H1 (cell line): ENCODE measurements at regions of chr2 and their contacts with region 1.

Region 1: DNA sequence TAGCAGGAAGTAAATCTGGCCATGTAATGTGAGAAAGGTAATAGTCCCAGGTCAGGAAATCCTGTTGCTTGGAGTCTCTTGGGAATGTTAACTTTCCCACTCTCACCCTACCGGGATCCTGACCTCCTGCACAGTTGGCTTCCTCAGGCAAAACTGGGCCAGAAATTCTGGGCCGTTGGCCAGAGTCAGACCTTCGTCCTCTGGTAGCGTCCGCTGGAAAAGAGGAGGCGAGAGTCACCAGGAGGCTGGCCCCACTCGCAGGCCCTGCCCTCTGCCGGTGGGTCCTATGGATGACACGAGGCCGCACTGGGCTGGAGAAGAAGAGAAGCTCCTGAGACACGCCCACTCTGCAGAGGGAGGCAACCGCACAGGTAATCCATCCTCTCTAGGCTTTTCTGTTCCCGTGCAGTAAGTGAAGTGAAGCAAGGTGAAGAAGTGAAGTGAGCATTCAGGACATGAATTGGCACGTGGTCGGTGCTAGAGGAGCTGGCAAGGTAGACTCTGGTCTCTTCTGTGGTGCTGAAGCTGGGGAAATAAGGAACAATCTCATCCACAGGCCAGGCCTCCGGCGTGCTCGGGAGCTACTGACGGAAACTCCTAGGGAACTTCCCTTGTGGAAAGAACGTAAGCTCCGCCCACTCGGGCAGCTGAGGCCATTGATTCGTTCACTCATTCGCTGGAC is 182.7 kb upstream of the GLI2 start:
- DNase-seq: peak; percentile 41 to 91
- H3K4me3 ChIP-seq: peak overlapping the region; percentile 31 to 51 (median 37); a peak in 5 of 8 replicates
- H3K27ac ChIP-seq: no peak overlapping the region
- H3K4me1 ChIP-seq: no peaks in the 10 kb centered on the region; a peak in 1 of 7 replicates
- H3K27me3 ChIP-seq: peaks cover 4 to 25% (median 19%) of the 10 kb centered on the region in 4 experiments
- CTCF ChIP-seq: peak; percentile 88 to 94 (median 88)
- EP300 ChIP-seq: no peak
- POLR2A ChIP-seq: no peak
- RAD21 ChIP-seq: peak; percentile 68 to 79

Region 2: DNA sequence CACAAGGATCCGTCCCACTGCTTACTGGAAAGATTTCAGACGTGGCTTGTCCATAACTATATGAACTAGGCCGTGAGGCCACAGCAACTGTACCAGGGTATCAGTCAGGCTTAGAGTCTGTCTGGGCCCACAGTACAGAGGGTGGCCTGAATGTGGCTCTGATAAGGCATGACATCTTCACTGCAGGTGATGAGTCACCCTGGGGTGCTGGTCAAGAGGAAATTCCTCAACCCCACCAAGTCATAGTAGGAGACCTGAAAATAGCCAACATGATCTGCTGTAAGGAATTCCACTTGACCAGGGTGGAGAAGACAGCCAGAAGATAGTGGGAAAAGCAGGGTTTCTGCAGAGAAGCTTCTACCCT is 99.3 kb before region 1 on chr2:
- CTCF ChIA-PET with region 1: interaction called, 10 read pairs
- POLR2A ChIA-PET with region 1: no interaction called
- DNase-seq: no peak
- H3K4me3 ChIP-seq: no peak overlapping the region
- H3K27ac ChIP-seq: no peak overlapping the region
- H3K4me1 ChIP-seq: peaks cover 0 to 2% (median 0%) of the 10 kb centered on the region in 4 experiments; a peak in 2 of 7 replicates
- H3K27me3 ChIP-seq: peaks cover 0 to 19% (median 9%) of the 10 kb centered on the region in 4 experiments; a peak in 3 of 7 replicates
- CTCF ChIP-seq: no peak
- EP300 ChIP-seq: no peak
- POLR2A ChIP-seq: no peak
- RAD21 ChIP-seq: no peak

Region 3: DNA sequence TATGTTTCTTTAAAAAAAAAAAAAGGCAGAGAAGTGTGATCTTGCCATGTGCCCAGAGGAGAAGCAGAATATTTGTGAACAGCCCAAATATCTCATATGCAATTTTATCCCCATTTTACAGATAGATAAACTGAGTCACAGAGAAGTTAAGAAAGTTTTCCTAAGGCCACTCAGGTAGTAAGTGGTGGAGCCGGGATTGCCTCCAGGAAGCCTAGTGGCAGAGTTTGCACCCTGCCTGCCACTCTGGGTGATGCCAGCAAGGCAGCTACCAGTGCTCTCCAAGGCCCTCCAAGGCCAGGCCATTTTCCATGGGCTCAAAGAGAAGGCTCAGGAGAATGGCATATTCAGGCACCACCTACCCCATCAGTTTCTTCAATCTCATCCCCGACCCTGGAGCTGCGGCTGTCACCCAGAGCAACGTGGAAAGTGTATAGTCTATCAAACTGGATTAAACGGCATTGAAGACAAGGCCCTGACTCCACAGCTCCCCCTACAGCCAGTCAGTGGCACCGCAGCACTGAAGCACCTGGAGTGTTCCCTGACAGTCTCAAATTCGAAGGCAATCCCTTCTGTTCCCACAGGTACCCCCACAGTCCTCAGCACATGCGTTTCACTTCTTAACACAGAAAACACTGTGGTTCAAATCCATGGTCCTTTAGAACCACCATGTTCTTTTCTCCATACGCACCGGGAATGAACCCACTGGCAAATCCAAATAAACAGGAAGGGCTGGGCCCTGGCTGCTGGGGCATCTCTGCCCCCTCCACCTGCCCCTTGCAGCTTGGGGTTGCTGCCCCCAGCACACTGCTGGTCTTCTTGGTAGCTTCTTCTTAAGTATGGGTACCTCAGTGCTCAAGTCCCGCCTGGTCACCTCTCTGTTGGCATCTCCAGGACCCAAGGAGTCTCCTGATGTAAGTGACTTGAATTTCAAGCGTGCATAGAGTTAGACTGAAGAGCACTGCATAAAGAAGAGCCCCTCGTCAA is 31.7 kb before region 1 on chr2:
- CTCF ChIA-PET with region 1: interaction called, 17 read pairs
- POLR2A ChIA-PET with region 1: no interaction called
- DNase-seq: peak in 1 of 2 experiments; percentile 89
- H3K4me3 ChIP-seq: no peak overlapping the region
- H3K27ac ChIP-seq: no peak overlapping the region
- H3K4me1 ChIP-seq: peaks cover 0 to 7% (median 4%) of the 10 kb centered on the region in 4 experiments; a peak in 5 of 7 replicates
- H3K27me3 ChIP-seq: peaks cover 0 to 6% (median 4%) of the 10 kb centered on the region in 4 experiments; a peak in 4 of 7 replicates
- CTCF ChIP-seq: peak; percentile 85 to 98 (median 96)
- EP300 ChIP-seq: no peak
- POLR2A ChIP-seq: no peak
- RAD21 ChIP-seq: peak; percentile 67 to 69

Region 4: DNA sequence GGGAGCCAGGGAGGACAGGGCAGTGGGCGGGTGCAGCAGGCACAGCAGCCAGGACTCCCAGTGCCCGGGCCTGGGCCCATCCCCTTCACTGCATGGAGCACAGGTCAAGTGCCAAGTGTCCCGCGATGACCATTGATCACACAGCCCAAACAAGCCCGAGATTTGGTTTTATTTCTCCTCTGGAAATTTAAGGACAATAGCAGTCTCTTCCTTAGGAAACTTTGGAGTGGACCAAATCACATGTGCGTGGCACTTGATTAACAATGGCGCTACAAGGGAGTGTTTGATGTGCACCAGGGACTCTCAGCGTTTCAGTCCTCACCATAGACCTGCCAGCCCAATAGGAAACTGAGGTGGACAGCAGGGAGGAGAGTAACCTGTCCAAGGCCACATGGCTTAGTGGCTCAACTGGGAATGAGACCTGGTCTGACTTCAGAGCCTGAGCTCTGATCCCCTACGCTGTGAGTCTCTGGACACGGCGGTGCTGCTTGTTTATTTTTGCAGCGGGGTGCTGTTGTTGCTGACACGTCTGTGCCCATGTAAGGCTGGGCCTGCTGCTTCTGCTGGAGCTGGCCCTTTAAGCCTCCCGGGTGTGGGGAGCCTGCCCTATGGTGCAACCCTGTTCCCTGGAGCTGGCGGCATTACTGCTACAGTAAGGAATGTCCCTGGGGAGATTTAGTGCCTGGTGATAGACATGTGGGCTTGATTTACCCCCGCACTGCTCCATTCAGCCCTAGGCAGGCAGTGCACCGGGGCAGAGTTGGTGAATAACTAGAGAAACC is 12.8 kb before region 1 on chr2:
- CTCF ChIA-PET with region 1: interaction called, 24 read pairs
- POLR2A ChIA-PET with region 1: interaction called, 3 read pairs
- DNase-seq: no peak
- H3K4me3 ChIP-seq: no peak overlapping the region
- H3K27ac ChIP-seq: no peak overlapping the region
- H3K4me1 ChIP-seq: peaks cover 0 to 5% (median under 1%) of the 10 kb centered on the region in 4 experiments; a peak in 2 of 7 replicates
- H3K27me3 ChIP-seq: peaks cover 0 to 3% (median 0%) of the 10 kb centered on the region in 4 experiments; a peak in 3 of 7 replicates
- CTCF ChIP-seq: no peak
- EP300 ChIP-seq: no peak
- POLR2A ChIP-seq: no peak
- RAD21 ChIP-seq: no peak

Region 5: DNA sequence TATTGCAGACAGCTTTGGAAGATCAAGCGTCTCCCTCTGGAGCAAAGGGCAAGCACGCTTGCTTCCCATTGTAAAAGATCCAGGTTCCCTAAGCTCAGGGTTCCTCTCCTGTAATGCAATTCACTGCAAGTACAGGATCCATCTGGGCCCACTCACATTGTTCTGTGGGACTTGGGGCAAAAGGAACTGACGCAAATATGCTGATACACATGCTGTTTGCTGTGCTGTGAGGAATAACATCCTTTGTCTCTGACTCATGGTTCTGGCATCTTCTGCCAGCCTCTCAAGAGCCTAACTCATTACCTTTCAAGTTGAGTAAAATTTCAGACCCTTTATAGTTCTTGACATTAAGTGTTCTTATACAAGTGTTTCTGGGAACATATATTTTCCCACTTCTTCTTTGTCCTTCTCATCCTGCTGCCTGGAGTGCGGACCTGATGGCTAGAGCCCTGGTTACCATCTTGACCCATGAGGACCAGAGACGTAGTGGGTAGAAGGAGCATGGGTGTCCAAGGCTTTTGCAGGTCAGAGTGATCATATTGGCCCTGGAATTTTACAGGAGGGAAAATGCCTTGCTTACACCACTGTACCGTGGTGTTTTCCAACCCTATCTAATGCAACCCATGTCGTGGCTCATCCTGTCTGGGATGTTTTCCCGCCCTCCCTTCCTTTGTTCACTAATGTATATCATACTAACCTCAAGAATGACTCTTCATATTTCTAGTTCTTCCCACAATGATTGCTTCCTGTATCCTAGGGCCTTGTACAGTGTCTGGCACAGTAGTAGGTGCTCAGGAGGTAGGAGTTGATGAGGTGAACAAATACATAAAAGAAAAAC is 37.0 kb after region 1 on chr2:
- CTCF ChIA-PET with region 1: interaction called, 11 read pairs
- POLR2A ChIA-PET with region 1: no interaction called
- DNase-seq: no peak
- H3K4me3 ChIP-seq: no peak overlapping the region
- H3K27ac ChIP-seq: no peak overlapping the region
- H3K4me1 ChIP-seq: peaks cover 6 to 35% (median 24%) of the 10 kb centered on the region in 4 experiments
- H3K27me3 ChIP-seq: peaks cover 7 to 56% (median 53%) of the 10 kb centered on the region in 4 experiments
- CTCF ChIP-seq: no peak
- EP300 ChIP-seq: no peak
- POLR2A ChIP-seq: no peak
- RAD21 ChIP-seq: no peak

Region 6: GRCh38 chr2:120680136-120680761 is 127.3 kb after region 1 on chr2:
- CTCF ChIA-PET with region 1: interaction called, 17 read pairs
- POLR2A ChIA-PET with region 1: no interaction called
- DNase-seq: peak in 1 of 2 experiments; percentile 91
- H3K4me3 ChIP-seq: no peak overlapping the region
- H3K27ac ChIP-seq: no peak overlapping the region
- H3K4me1 ChIP-seq: no peaks in the 10 kb centered on the region
- H3K27me3 ChIP-seq: peaks cover 0 to 14% (median 6%) of the 10 kb centered on the region in 4 experiments; a peak in 3 of 7 replicates
- CTCF ChIP-seq: peak; percentile 78 to 79 (median 78)
- EP300 ChIP-seq: no peak
- POLR2A ChIP-seq: no peak
- RAD21 ChIP-seq: peak; percentile 86 to 91

Region 7: GRCh38 chr2:120712180-120712681 is 159.3 kb after region 1 on chr2:
- CTCF ChIA-PET with region 1: no interaction called
- POLR2A ChIA-PET with region 1: no interaction called
- DNase-seq: no peak
- H3K4me3 ChIP-seq: no peak overlapping the region
- H3K27ac ChIP-seq: no peak overlapping the region
- H3K4me1 ChIP-seq: peaks cover 14 to 23% (median 17%) of the 10 kb centered on the region in 4 experiments
- H3K27me3 ChIP-seq: peaks cover 0 to 19% (median 8%) of the 10 kb centered on the region in 4 experiments; a peak in 5 of 7 replicates
- CTCF ChIP-seq: no peak
- EP300 ChIP-seq: no peak
- POLR2A ChIP-seq: no peak
- RAD21 ChIP-seq: no peak